ENCODE measurements at regions of chr1 and their contacts with region 1.

Region 1: DNA sequence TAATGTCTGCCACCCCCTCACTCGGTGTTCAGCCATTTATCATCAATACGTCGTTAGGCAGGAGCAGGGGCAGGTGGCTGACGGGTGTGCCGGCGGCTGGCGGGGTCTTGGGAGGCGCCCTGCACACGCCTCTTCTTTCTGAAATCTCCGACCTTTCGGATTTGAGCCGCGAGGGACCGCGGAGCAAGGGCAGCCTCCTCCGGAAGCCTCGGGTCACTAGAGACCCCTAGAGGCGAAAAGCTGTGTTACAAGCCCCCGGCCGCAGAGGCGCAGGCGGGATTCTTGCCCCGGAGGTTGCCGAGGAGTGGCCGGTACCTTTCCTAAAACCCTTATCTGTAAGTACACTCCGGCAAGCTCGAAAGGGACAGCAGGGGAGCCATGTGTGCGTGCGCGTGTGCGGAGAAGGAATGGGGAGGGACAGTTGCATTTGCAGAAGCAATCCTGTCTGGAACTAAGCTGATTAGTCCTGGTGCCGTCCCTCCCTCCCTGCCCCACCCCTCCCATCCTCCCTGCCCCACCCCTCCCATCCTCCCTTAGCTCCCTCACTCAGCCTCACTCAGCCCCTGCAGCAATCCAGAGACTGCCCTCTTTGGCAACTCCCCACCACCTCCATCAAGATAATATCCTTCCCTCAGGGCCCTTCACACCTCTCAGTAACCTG is 11.0 kb downstream of the BRINP2 start:
- DNase-seq: peak; percentile 65 to 75
- ATAC-seq: peak; percentile 94 to 99
- H3K4me3 ChIP-seq: peak overlapping the region; percentile 38; the same call in 2 of the 3 replicates
- H3K27ac ChIP-seq: 0 out of 6 replicates have a peak overlapping the region, but pooled peaks of 1 of the 2 experiments have one; percentile 48
- H3K4me1 ChIP-seq: 0 out of 3 replicates have a peak, but pooled peaks cover 3% of the 10 kb centered on the region
- CTCF ChIP-seq: peak; percentile 72
- EP300 ChIP-seq: no peak
- POLR2A ChIP-seq: no peak
- RAD21 ChIP-seq: peak; percentile 73 to 78

Region 2: DNA sequence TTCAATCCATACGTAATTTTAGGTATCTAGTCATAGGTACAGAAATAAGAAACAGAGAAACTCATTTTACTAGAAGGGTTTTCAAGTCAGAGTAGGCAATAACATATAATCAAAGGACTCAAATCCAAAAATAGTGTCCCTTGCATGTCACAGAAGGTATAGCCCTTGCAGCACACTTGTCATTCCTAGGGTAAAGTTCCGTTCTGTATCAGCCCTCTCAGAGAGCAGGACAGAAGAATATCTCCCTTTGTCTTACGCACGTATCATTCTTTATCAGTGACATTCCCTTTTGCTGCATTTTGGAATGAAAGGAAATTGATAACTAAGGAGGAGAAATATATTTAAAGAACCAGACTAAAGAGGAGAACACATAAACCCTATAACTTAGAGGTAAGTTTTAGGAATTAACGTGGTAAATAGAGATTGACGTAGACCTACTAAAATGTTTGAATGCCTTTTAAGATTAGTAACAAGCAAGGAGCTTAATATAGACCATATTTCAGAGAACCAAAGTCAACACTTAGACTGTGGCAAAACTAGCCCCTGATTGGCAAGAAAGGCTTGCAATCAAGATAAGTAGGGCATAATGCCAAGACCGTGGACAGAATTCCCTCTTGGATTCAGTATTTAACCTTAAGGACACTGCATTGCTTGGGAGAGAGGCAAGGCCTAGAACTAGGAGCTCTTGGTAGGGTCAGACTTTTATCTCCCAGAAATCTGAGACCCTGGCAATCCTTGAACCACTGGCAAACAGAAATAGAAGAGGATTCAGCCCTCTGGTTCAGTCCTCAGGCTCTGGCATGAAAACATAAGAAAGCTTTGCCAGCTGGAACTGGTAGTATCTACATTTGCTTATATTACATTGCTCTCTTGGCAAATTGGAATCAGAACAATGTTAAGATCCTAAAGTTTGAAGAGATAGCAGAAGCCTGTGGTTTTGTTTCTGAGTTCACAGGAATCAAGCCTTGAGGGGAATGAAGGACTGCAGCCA is 249.4 kb before region 1 on chr1:
- CTCF ChIA-PET with region 1: no interaction called
- POLR2A ChIA-PET with region 1: no interaction called
- DNase-seq: no peak
- ATAC-seq: no peak
- H3K4me3 ChIP-seq: no peak overlapping the region
- H3K27ac ChIP-seq: no peak overlapping the region
- H3K4me1 ChIP-seq: no peaks in the 10 kb centered on the region
- CTCF ChIP-seq: no peak
- EP300 ChIP-seq: no peak
- POLR2A ChIP-seq: no peak
- RAD21 ChIP-seq: no peak

Region 3: DNA sequence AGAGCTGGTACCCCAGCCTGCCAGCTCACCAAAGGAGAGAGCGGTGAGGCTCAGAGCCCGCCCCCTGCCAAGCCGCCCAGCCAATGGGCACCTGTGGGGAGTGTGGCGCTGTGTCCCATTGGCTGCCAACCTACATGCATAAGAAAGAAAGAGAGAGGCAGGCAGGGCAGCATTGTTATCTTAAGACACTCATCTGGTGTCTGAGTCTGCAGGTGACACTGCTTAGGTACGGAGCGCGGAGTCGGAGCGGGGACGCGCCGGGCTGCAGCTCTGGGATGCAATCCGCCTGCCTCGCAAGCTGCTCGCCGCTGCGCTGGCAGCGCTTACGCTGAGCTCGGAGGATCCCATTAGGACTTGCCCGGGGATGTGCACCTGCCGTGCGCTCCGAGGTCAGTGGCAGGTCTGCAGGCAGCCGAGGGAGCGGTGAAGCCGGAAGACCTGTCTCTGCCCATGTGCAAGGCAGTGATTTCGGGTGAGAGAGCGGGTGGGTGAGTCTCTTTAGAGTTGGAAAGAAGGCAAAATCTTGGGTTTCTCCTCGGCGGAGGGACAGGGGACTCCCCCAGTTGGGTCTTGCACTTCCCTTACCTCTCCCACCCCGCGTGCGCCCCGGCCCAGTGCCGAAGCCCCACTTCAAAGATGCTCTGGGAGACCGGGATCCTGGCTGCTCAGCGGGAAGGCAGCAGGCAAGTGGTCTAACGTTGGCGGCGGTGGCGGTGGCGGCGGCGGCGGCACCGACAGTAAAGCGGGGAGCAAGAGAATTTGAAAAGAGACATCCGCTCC is 10.8 kb before region 1 on chr1 and contains the start of gene BRINP2:
- CTCF ChIA-PET with region 1: interaction called, 25 read pairs
- POLR2A ChIA-PET with region 1: no interaction called
- DNase-seq: peak; percentile 46 to 66
- ATAC-seq: peak; percentile 94 to 98
- H3K4me3 ChIP-seq: peak within 1 kb of the TSS; percentile 45
- H3K27ac ChIP-seq: no peak within 1 kb of the TSS
- H3K4me1 ChIP-seq: peaks cover 7% of the 10 kb centered on the region; the same call in 1 of the 3 replicates
- CTCF ChIP-seq: no peak
- EP300 ChIP-seq: no peak
- POLR2A ChIP-seq: no peak
- RAD21 ChIP-seq: no peak
- polyA plus RNA-seq, gene BRINP2: 0.07 and 0.09 TPM in 2 replicates

Region 4: DNA sequence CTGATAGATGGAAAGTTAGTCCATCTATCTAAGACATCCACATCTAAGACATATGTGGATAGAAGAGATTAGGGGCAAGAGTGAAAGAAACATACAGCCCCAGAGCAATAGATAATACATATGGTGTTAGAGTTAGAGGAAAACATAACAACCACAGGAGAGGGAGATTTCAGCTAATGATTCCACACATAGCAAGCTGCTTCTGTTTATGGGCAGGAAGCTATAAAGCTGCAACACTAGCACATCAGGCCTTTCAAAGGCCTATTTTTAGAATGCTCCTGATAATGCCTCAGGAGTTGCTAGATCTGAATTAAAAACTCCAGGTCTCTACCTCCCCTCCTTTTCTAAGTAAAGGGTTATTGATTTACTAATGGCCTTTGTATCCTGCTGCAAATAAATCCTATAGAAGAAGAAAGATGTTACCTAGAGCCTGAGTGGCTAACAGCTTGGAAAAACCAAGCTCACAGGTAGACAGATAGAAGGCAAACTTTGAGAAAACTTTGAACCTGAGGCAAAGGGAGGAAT is 25.1 kb after region 1 on chr1:
- CTCF ChIA-PET with region 1: interaction called, 11 read pairs
- POLR2A ChIA-PET with region 1: no interaction called
- DNase-seq: no peak
- ATAC-seq: no peak
- H3K4me3 ChIP-seq: no peak overlapping the region
- H3K27ac ChIP-seq: peak overlapping the region in 1 of 2 experiments; percentile 79; a peak in 2 of 6 replicates
- H3K4me1 ChIP-seq: peaks cover 27% of the 10 kb centered on the region
- CTCF ChIP-seq: no peak
- EP300 ChIP-seq: no peak
- POLR2A ChIP-seq: no peak
- RAD21 ChIP-seq: no peak